HEK293 (cell line): ENCODE measurements at regions of chr18 and their contacts with region 1.

Region 1: GRCh38 chr18:45722899-45723298 is 1.1 kb upstream of the SLC14A1 start:
- H3K4me3 ChIP-seq: no peak overlapping the region
- H3K27ac ChIP-seq: no peak overlapping the region
- H3K4me1 ChIP-seq: no peaks in the 10 kb centered on the region
- CTCF ChIP-seq: no peak

Region 2: GRCh38 chr18:45690975-45691815 is 31.7 kb before region 1 on chr18:
- CTCF ChIA-PET with region 1: interaction called, 12 read pairs
- POLR2A ChIA-PET with region 1: no interaction called
- H3K4me3 ChIP-seq: no peak overlapping the region
- H3K27ac ChIP-seq: no peak overlapping the region
- H3K4me1 ChIP-seq: no peaks in the 10 kb centered on the region
- CTCF ChIP-seq: peak; percentile 90

Region 3: DNA sequence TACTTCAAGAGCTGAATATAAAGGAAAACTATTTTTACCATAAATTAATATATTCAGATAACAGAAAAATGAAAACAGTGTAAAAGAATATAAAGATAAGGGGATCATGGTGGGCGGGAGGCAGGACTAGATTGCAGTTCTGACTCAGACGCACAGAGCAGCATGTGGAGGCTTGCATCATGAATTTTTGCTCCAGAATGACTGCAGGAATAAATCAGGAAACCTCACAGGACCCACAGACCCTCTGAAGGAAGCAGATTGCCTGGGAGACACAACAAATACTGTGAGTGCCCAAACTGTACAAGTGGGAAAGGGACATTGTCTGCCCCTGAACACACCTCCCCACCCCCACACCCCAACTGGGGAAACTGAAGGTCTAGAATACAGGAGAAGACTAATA is 83.3 kb after region 1 on chr18:
- CTCF ChIA-PET with region 1: interaction called, 14 read pairs
- POLR2A ChIA-PET with region 1: no interaction called
- H3K4me3 ChIP-seq: no peak overlapping the region
- H3K27ac ChIP-seq: no peak overlapping the region
- H3K4me1 ChIP-seq: no peaks in the 10 kb centered on the region
- CTCF ChIP-seq: no peak

Region 4: DNA sequence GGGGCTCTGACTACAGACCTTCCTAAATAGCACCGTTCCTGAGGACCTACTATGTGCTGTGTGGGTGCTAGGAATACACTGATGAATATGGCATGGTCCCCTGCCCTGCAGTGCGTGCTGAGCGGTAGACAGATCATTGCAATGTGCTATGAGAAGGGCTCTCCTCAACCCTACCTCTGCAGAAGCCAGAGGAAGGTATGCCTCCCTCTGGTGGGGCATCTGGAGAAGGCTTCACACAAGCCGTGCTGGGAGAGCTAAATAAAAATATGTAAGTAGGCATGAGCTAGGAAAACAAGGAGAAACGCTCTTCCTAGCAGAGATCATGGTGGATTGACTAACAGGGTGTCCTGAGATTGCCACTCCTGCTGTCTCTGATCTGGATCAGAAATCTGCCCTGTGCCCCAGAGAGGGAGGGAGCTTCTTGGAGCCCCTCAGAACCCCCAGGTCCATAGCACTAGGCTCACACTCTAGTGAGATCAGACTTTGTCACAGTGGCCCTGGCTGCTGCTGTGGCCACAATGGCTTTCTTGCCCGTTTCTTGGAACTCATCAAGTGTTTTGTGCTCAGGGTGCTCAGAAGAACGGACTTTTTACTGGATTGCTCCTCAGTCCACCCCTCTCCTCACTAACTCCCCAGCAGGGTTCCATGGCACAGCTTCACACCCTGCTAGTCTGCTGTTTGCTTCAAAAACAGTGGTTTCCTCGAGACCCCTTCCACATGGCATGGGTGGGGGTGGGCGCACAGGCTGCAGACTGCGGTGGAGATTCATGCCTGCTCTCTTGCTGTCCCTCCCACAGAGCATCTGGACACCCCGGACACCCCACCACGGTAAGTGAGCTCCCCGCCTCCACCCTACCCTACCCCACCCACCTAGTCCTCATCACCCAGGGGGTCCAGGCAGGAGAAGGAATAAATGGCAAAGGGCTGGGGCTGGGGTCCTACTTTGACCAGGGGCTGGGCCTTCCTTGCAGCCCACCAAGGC is 116.8 kb after region 1 on chr18:
- CTCF ChIA-PET with region 1: interaction called, 14 read pairs
- POLR2A ChIA-PET with region 1: no interaction called
- H3K4me3 ChIP-seq: no peak overlapping the region
- H3K27ac ChIP-seq: no peak overlapping the region
- H3K4me1 ChIP-seq: peaks cover 3% of the 10 kb centered on the region; the same call in 1 of the 2 replicates
- CTCF ChIP-seq: peak; percentile 77